ENCODE measurements at regions of chr21 and their contacts with region 1.

Region 1: GRCh38 chr21:28745131-28746016 is 247.3 kb downstream of the LTN1 start:
- DNase-seq: peak; percentile 86

Region 2: GRCh38 chr21:26850108-26850643 is 1895.2 kb before region 1 on chr21:
- intact Hi-C with region 1: loop called (anchors 10 kb)
- DNase-seq: no peak

Region 3: DNA sequence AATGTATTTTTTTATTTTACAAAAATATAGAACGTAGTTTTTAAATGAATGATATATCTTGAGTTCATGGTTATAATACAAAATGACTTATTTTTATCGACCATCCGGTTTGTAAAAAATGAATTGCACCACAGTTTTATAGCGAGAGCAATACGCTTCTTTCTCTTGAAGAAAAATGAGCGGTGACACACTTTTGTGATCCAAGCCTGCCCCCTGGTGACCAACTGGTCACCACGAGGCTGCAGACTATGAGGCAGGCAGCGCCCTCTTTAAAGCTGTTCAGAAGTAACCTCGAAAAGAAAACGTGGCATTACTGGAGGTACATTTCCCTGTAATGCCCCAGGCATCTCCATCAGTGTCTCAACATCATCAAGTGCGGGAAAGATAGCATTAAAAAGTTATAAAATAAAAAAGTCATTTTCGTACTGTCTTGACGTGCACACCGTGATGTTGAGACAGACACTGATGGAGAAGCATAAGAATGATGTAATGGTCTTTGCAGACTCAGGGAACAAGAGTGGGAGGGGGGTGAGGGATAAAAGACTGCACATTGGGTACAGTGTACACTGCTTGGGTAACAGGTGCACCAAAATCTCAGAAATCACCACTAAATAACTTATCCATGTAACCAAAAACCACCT is 1044.3 kb before region 1 on chr21:
- intact Hi-C with region 1: loop called in 1 of 2 experiments (anchors 5 kb)
- DNase-seq: peak; percentile 93

Region 4: GRCh38 chr21:28283641-28284490 is 461.5 kb before region 1 on chr21:
- intact Hi-C with region 1: loop called in 1 of 2 experiments (anchors 10 kb)
- DNase-seq: no peak

Region 5: DNA sequence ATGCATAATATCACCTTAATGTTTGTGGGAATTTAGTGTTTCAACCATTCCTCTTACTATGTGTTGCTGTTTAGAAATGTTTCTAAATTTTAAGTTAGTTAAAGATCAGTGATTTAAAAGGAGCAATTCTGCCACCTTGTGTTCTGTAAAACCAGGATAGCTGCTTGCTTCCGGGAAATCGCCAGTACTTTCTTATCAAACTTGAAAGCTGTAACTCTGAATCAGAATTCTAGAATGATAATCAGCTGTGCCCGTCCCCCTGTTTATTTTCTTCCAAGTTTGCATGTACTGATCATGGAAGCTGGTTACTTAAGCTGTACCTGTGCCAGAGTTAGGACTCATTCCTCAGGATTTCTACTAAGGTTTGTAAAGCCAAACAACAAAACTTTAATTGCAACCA is 409.1 kb before region 1 on chr21:
- intact Hi-C with region 1: loop called in 1 of 2 experiments (anchors 10 kb)
- DNase-seq: no peak

Region 6: DNA sequence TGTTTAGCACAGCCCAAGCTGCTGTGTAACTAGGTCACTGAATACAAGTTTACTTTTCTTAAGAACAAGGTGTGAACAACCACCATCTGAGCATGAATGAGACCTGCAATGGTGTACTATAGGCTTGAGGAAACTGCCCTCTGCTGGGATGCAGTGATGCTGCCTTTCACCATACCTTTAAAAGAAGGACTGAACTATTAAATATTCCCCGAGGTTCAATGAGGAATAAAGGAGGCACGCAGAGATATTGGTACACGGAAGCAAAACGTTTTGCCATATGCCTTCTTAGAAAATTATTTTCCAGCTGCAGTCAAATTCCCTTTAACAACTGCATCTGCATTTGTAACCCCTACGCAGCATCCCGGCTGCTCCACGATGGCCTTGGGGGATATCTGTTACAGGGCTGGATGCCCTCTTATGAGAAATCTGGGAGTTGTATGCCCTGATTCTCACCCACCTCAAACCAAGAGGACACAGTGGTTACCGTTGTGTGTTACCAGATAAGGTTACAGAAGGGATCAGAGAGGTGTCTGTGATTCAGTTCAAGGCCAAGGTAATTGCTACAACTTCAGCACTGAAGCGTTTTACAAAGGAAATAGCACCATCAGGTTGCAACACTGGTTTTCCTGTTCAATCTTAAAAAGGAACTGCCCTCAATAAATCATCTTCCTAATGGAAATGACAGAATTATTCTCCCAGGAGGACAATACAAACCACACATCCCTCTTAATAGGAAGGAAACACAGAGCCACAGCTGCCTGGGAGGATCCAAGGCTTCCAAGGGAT is 223.2 kb before region 1 on chr21:
- intact Hi-C with region 1: loop called in 1 of 2 experiments (anchors 10 kb)
- DNase-seq: peak; percentile 68

Measured in posterior vena cava (tissue), 2 donors.